Astrocyte of the cerebellum (primary cell): ENCODE measurements at regions of chr12 and their contacts with region 1.

Region 1: GRCh38 chr12:104276273-104277131 is 27.0 kb upstream of the EID3 start:
- DNase-seq: no peak
- H3K4me3 ChIP-seq: no peak overlapping the region
- CTCF ChIP-seq: no peak

Region 2: GRCh38 chr12:104219908-104220530 is 56.5 kb before region 1 on chr12:
- in situ Hi-C with region 1: loop called (anchors 5 kb)
- DNase-seq: no peak
- H3K4me3 ChIP-seq: no peak overlapping the region
- CTCF ChIP-seq: no peak

Region 3: GRCh38 chr12:104381731-104382480 is 105.4 kb after region 1 on chr12:
- in situ Hi-C with region 1: no loop called
- DNase-seq: peak; percentile 73
- H3K4me3 ChIP-seq: no peak overlapping the region
- CTCF ChIP-seq: peak; percentile 97